Caco-2 (cell line): ENCODE measurements at regions of chr1 and their contacts with region 1.

Region 1: DNA sequence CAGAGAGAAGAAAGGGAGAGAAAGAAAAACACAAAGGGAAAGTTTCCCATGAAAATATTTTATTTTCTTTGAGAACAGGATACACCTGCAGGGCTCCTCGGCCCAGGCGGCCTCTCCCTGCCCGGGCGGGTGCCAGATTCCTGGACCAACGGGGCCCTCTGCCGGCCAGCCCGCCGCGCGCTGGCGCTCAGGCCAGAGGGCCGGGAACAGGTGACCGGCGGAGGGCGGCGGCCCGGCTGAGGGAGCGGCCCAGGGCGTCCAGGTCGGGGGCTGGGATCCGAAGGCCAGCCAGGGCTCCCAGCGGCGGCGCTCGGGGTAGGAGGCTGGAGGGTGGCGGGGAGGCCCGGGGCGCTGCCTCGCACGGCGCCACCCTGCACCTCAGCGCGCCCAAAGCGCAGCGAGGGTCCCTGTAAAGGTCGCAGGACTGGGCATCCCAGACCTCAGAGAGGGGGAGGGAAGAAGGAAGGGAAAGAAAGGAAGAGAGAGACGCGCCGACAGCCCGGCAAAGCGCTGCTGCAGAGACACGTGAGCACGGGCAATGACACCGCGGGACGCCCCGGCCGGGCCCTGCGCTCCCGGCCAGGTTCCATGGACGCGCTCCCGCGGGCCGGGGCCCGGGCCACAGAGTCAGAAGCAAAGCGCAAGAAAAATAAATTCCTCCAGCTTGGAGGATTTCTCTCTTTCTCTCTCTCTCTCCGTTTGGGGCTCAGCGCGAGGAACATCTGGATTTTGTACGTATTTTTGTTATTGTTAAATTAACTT is 927 bp downstream of the WNT9A start:
- DNase-seq: peak; percentile 75 to 91
- H3K4me3 ChIP-seq: peak overlapping the region; percentile 58
- H3K4me3 Mint-ChIP-seq: peak overlapping the region; percentile 71
- H3K27ac Mint-ChIP-seq: peak overlapping the region; percentile 39
- H3K4me1 ChIP-seq: peaks cover 9% of the 10 kb centered on the region
- H3K4me1 Mint-ChIP-seq: no peaks in the 10 kb centered on the region
- H3K27me3 ChIP-seq: no peaks in the 10 kb centered on the region
- H3K27me3 Mint-ChIP-seq: no peaks in the 10 kb centered on the region
- CTCF ChIP-seq: peak; percentile 79 to 81

Region 2: DNA sequence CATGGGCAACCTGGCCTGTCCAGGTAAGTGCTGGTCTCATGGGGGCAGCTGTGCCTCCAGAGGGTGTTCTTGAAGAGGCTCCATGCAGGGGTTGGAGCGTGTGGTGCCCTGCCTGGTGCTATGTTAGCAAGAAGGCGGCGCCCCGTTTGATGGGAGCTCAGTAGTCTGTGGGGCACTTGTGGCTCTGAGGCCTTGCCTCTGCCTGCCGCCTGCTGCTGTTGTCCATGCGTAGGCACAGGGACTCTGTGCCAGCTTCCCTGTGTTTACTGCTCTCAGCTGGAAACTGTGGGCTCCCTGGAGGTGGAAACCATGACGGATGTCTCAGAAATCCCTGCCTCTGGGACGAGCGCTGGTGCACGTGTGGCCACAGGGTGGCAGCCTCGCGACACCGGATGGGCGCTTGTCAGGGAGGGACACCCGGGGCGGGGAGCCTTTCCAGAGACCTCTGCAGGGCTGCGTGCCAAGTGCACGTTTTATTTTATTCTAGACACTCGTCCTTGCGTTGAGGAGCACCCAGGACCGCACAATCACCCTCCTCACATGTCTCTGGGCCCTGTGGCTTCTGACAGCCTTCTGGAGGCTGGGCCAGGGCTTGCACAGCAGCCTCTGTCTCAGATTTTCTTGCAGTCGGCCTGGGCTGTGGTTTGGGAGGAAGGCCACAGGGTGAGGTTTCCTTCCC is 184.4 kb before region 1 on chr1:
- CTCF ChIA-PET with region 1: interaction called, 4 read pairs
- POLR2A ChIA-PET with region 1: no interaction called
- intact Hi-C with region 1: loop called (anchors 1 kb)
- DNase-seq: peak; percentile 80 to 89
- H3K4me3 ChIP-seq: no peak overlapping the region
- H3K4me3 Mint-ChIP-seq: no peak overlapping the region
- H3K27ac Mint-ChIP-seq: no peak overlapping the region
- H3K4me1 ChIP-seq: 0 out of 2 replicates have a peak, but pooled peaks cover 5% of the 10 kb centered on the region
- H3K4me1 Mint-ChIP-seq: no peaks in the 10 kb centered on the region
- H3K27me3 ChIP-seq: no peaks in the 10 kb centered on the region
- H3K27me3 Mint-ChIP-seq: no peaks in the 10 kb centered on the region
- CTCF ChIP-seq: peak; percentile 90 to 96

Region 3: DNA sequence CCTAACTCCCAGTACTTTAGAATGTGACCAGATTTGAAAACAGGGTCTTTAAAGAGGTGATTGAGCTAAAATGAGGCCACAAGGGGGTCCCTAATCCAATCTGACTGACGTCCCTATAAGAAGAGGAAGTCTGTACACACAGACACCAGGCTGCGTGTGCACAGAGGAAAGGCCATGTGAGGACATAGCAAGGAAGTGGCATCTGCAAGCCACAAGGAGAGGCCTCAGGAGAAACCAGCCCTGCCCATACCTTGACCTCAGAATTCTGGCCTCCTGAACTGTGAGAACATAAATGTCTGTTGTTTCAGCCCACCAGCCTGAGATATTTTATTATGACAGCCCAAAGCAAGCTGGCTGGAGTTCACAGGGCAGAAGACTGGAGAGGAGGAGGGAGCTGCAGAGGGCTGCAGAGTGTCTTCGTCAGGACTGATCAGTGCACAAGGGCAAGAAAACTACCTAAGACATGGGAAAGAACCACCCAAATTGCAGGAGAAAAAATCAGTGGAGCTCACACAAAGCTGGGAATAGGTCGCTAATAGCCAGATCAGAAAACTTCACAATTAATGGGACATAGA is 14.9 kb after region 1 on chr1:
- CTCF ChIA-PET with region 1: no interaction called
- POLR2A ChIA-PET with region 1: no interaction called
- intact Hi-C with region 1: no loop called
- DNase-seq: no peak
- H3K4me3 ChIP-seq: no peak overlapping the region
- H3K4me3 Mint-ChIP-seq: no peak overlapping the region
- H3K27ac Mint-ChIP-seq: no peak overlapping the region
- H3K4me1 ChIP-seq: no peaks in the 10 kb centered on the region
- H3K4me1 Mint-ChIP-seq: no peaks in the 10 kb centered on the region
- H3K27me3 ChIP-seq: no peaks in the 10 kb centered on the region
- H3K27me3 Mint-ChIP-seq: peaks cover 9% of the 10 kb centered on the region
- CTCF ChIP-seq: no peak